ENCODE measurements at regions of chr2 and their contacts with region 1.

Region 1: GRCh38 chr2:127408004-127408806 is 10.0 kb upstream of the PROC start:
- DNase-seq: peak in 1 of 2 donors; percentile 90
- H3K4me3 ChIP-seq: peak overlapping the region; percentile 50 to 66
- H3K27ac ChIP-seq: peak overlapping the region; percentile 96
- H3K4me1 ChIP-seq: peaks cover 28% of the 10 kb centered on the region
- H3K27me3 ChIP-seq: no peaks in the 10 kb centered on the region
- CTCF ChIP-seq: no peak
- POLR2A ChIP-seq: peak in 1 of 2 donors; percentile 60

Region 2: GRCh38 chr2:127342101-127342500 is 66.1 kb before region 1 on chr2:
- intact Hi-C with region 1: no loop called
- DNase-seq: no peak
- H3K4me3 ChIP-seq: no peak overlapping the region
- H3K27ac ChIP-seq: no peak overlapping the region
- H3K4me1 ChIP-seq: no peaks in the 10 kb centered on the region
- H3K27me3 ChIP-seq: no peaks in the 10 kb centered on the region
- CTCF ChIP-seq: no peak
- POLR2A ChIP-seq: no peak

Region 3: DNA sequence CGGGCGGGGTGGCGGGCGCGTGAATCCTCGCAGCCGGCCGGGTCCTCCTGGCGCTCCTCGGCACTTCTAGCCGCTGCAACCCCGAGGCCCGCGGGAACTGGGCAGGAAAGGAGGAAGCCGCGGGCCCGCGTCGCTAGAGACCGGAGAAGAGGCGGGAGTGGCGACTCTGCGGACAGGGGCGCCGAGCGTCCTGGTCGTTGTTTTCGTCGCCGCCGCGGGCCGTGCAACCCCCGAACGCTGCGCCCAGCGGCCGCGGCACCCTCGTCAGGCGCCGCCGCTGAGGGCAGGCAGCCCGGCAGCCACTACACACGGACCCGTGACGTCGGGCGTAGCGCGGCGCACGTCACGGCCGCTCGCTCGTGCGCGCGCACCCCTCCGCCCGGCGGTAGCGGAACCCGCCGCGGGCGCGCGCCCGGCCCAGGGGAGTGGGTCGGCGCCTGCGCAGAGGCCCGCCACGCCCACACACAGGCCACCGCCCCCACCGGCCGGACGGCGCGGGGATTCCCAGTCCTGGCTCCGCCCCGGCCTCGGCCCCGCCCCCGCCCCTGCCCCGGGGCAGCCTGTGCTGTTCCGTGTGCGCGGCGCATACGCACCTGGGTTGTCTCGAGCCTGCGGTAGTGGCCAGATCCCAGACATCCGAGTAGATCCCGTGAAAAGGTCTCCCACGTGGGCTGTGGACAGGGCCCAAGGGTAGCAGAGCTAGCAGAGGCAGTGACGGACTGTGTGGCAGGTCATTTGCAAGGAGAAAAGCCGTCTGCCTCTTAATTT is 20.4 kb before region 1 on chr2 and contains the start of gene MAP3K2:
- intact Hi-C with region 1: loop called (anchors 2 kb)
- DNase-seq: peak in 1 of 2 donors; percentile 95
- H3K4me3 ChIP-seq: peak within 1 kb of the TSS; percentile 95 to 97
- H3K27ac ChIP-seq: peak within 1 kb of the TSS; percentile 100
- H3K4me1 ChIP-seq: peaks cover 30% of the 10 kb centered on the region
- H3K27me3 ChIP-seq: no peaks in the 10 kb centered on the region
- CTCF ChIP-seq: no peak
- POLR2A ChIP-seq: peak in 1 of 2 donors; percentile 91
- total RNA-seq, gene MAP3K2: 36.6 TPM

Measured in vagina (tissue), 2 donors.